ENCODE measurements at regions of chr12 and their contacts with region 1.

Region 1: DNA sequence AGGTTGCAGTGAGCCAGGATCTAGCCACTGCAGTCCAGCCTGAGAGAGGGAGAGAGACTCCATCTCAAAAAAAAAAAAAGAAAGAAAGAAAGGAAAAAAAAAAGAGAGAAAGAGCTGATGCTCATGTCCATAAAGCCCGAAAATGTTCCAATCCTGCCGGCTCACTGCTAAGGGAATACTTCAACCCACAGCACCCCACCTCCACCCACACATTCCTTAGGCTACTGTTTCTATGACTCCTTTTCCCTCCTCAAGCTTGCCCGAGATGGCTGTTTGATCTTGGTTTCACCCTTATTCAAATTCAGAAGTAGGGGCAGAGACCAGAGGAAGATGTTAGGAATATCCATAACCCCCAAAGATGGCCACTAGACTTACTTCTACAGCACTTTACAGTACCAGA is 59.5 kb upstream of the RASSF3 start:
- DNase-seq: no peak
- ATAC-seq: no peak
- H3K4me3 Mint-ChIP-seq: no peak overlapping the region
- H3K27ac Mint-ChIP-seq: no peak overlapping the region
- H3K4me1 Mint-ChIP-seq: peaks cover 6% of the 10 kb centered on the region
- H3K27me3 Mint-ChIP-seq: peaks cover 10% of the 10 kb centered on the region

Region 2: GRCh38 chr12:64522316-64522715 is 28.4 kb before region 1 on chr12:
- CTCF ChIA-PET with region 1: no interaction called
- POLR2A ChIA-PET with region 1: no interaction called
- DNase-seq: no peak
- ATAC-seq: no peak
- H3K4me3 Mint-ChIP-seq: no peak overlapping the region
- H3K27ac Mint-ChIP-seq: peak overlapping the region; percentile 50
- H3K4me1 Mint-ChIP-seq: peaks cover 18% of the 10 kb centered on the region
- H3K27me3 Mint-ChIP-seq: peaks cover 5% of the 10 kb centered on the region

Region 3: DNA sequence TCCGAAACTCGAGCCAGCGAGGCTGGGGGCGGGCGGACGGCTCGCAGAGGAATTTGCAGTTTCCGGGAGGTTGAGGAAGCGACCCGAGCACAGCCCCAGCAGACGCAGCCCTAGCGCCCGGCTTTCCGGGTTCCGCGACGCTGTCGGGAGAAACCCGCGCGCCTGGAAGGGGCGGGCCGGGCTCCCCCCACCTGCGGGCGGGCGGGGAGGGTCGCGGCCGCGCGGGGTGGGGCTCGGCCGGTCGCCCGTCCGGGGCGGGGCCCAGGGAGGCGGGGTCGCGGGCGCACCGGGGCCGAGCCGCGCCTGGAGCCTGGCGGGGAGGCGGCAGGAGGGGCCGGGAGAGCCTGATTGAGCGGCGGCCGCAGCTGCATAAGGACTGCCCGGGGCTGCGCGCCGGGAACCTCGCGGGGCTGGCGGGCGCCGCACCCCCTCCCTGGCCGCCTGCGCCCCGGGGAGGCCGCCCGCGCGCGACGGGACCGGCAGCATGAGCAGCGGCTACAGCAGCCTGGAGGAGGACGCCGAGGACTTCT is 59.5 kb after region 1 on chr12 and contains the start of gene RASSF3:
- CTCF ChIA-PET with region 1: interaction called, 30 read pairs
- POLR2A ChIA-PET with region 1: interaction called, 4 read pairs
- DNase-seq: peak; percentile 84
- ATAC-seq: peak; percentile 71
- H3K4me3 Mint-ChIP-seq: peak within 1 kb of the TSS; percentile 99
- H3K27ac Mint-ChIP-seq: peak within 1 kb of the TSS; percentile 96
- H3K4me1 Mint-ChIP-seq: peaks cover 36% of the 10 kb centered on the region
- H3K27me3 Mint-ChIP-seq: no peaks in the 10 kb centered on the region
- total RNA-seq, gene RASSF3: 61.7 to 63.7 TPM

Region 4: DNA sequence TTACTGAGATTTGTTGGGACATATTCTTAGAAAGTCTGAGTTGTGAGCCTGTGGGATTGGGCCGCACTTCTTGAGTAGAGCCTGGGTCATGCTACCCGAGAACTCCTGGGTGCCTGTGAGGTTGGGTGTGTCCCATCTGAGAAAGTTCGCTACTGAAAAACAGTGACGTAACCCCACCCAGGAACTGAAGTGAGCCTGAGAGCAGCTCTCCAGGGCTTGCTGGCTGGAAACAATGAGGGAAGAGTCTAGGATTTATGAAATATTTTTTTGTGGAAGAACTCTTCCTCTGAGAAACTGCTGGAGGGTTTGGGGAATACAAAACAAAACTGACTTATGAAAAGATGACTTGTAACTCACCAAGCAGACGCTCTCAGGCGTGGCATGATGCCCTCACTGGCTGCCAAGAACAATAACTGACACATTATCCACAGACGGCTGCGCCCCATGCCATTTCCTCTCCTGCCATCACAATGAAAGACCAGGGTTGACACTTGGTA is 128.8 kb after region 1 on chr12:
- CTCF ChIA-PET with region 1: interaction called, 22 read pairs
- POLR2A ChIA-PET with region 1: no interaction called
- DNase-seq: peak; percentile 69
- ATAC-seq: peak; percentile 74
- H3K4me3 Mint-ChIP-seq: peak overlapping the region; percentile 60
- H3K27ac Mint-ChIP-seq: peak overlapping the region; percentile 88
- H3K4me1 Mint-ChIP-seq: peaks cover 90% of the 10 kb centered on the region
- H3K27me3 Mint-ChIP-seq: no peaks in the 10 kb centered on the region

Region 5: GRCh38 chr12:64706306-64706705 is 155.6 kb after region 1 on chr12:
- CTCF ChIA-PET with region 1: interaction called, 17 read pairs
- POLR2A ChIA-PET with region 1: no interaction called
- DNase-seq: no peak
- ATAC-seq: no peak
- H3K4me3 Mint-ChIP-seq: no peak overlapping the region
- H3K27ac Mint-ChIP-seq: no peak overlapping the region
- H3K4me1 Mint-ChIP-seq: peaks cover 6% of the 10 kb centered on the region
- H3K27me3 Mint-ChIP-seq: no peaks in the 10 kb centered on the region

Region 6: GRCh38 chr12:64723630-64724029 is 172.9 kb after region 1 on chr12:
- CTCF ChIA-PET with region 1: interaction called, 18 read pairs
- POLR2A ChIA-PET with region 1: no interaction called
- DNase-seq: peak; percentile 40
- ATAC-seq: peak; percentile 87
- H3K4me3 Mint-ChIP-seq: no peak overlapping the region
- H3K27ac Mint-ChIP-seq: peak overlapping the region; percentile 80
- H3K4me1 Mint-ChIP-seq: peaks cover 16% of the 10 kb centered on the region
- H3K27me3 Mint-ChIP-seq: no peaks in the 10 kb centered on the region

Region 7: GRCh38 chr12:64801381-64801780 is 250.6 kb after region 1 on chr12:
- CTCF ChIA-PET with region 1: interaction called, 13 read pairs
- POLR2A ChIA-PET with region 1: no interaction called
- DNase-seq: no peak
- ATAC-seq: no peak
- H3K4me3 Mint-ChIP-seq: no peak overlapping the region
- H3K27ac Mint-ChIP-seq: no peak overlapping the region
- H3K4me1 Mint-ChIP-seq: peaks cover 2% of the 10 kb centered on the region
- H3K27me3 Mint-ChIP-seq: peaks cover 32% of the 10 kb centered on the region

Measured in activated CD8-positive, alpha-beta T cell treated with anti-CD3 and anti-CD28 coated beads, Interleukin-2, amount 10 ng/mL, durations not matched to agents 7 days and 5 days (primary cell).